ENCODE measurements at regions of chr5 and their contacts with region 1.

Region 1: GRCh38 chr5:134106991-134107701 is 7.3 kb upstream of the TCF7 start:
- DNase-seq: peak; percentile 93
- H3K4me3 ChIP-seq: peak overlapping the region in 1 of 2 experiments; percentile 29; a peak in 1 of 4 replicates
- H3K27ac ChIP-seq: peak overlapping the region in 1 of 2 experiments; percentile 100; a peak in 2 of 4 replicates
- H3K4me1 ChIP-seq: peaks cover 0 to 84% of the 10 kb centered on the region in 2 experiments; a peak in 2 of 4 replicates
- H3K27me3 ChIP-seq: no peaks in the 10 kb centered on the region
- CTCF ChIP-seq: no peak
- EP300 ChIP-seq: peak; percentile 19 to 99; a peak in 3 of 4 replicates
- RAD21 ChIP-seq: peak; percentile 31; the same call in 1 of the 2 replicates

Region 2: GRCh38 chr5:134092878-134093277 is 14.3 kb before region 1 on chr5:
- CTCF ChIA-PET with region 1: interaction called, 20 read pairs
- POLR2A ChIA-PET with region 1: interaction called, 11 read pairs
- DNase-seq: no peak
- H3K4me3 ChIP-seq: no peak overlapping the region
- H3K27ac ChIP-seq: peak overlapping the region in 1 of 2 experiments; percentile 73; a peak in 1 of 4 replicates
- H3K4me1 ChIP-seq: peaks cover 0 to 62% of the 10 kb centered on the region in 2 experiments; a peak in 1 of 4 replicates
- H3K27me3 ChIP-seq: no peaks in the 10 kb centered on the region
- CTCF ChIP-seq: no peak
- EP300 ChIP-seq: no peak
- RAD21 ChIP-seq: no peak

Region 3: GRCh38 chr5:134125039-134126015 is 18.2 kb after region 1 on chr5:
- CTCF ChIA-PET with region 1: interaction called, 12 read pairs
- POLR2A ChIA-PET with region 1: interaction called, 15 read pairs
- DNase-seq: peak; percentile 82
- H3K4me3 ChIP-seq: no peak overlapping the region
- H3K27ac ChIP-seq: peak overlapping the region; percentile 88 to 97
- H3K4me1 ChIP-seq: peaks cover 31 to 85% of the 10 kb centered on the region in 2 experiments
- H3K27me3 ChIP-seq: no peaks in the 10 kb centered on the region
- CTCF ChIP-seq: no peak
- EP300 ChIP-seq: peak in 1 of 2 experiments; percentile 75; a peak in 2 of 4 replicates
- RAD21 ChIP-seq: no peak